ENCODE measurements at regions of chr20 and their contacts with region 1.

Region 1: DNA sequence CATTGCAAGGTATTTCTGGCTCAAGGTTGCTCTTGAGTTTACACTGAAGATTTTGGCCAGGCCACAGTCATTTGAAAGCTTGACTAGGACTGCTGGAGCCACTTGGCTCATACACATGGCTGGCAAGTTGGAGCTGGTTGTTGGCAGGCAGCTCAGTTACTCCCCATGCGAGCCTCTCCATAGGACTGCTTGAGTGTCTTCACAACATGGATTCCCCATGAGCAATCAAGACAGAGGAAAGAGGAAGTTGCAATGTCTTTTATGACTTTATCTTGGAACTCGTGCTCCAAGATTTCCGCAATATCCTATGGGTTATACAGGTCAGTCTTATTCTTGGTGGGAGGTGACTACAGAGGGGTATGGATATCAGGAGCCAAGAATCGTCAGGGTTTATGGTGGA is 1.4 kb upstream of the MANBAL start:
- DNase-seq: no peak
- ATAC-seq: no peak
- H3K4me3 ChIP-seq: no peak overlapping the region
- H3K27ac ChIP-seq: peak overlapping the region in 1 of 12 donors; percentile 97
- H3K4me1 ChIP-seq: peaks cover 0 to 41% (median 9%) of the 10 kb centered on the region in 12 donors
- H3K27me3 ChIP-seq: no peaks in the 10 kb centered on the region
- CTCF ChIP-seq: no peak
- POLR2A ChIP-seq: no peak

Region 2: GRCh38 chr20:37308086-37309050 is 20.3 kb after region 1 on chr20:
- intact Hi-C with region 1: loop called in 1 of 10 experiments (anchors 2 kb)
- DNase-seq: peak in 2 of 5 donors; percentile 39 to 58
- ATAC-seq: peak; percentile 21 to 64 (median 42)
- H3K4me3 ChIP-seq: no peak overlapping the region
- H3K27ac ChIP-seq: peak overlapping the region in 4 of 12 donors; percentile 0 to 22 (median 13)
- H3K4me1 ChIP-seq: peaks cover 0 to 50% (median 6%) of the 10 kb centered on the region in 12 donors
- H3K27me3 ChIP-seq: no peaks in the 10 kb centered on the region
- CTCF ChIP-seq: no peak
- POLR2A ChIP-seq: no peak

Region 3: GRCh38 chr20:37319235-37319671 is 31.2 kb after region 1 on chr20:
- intact Hi-C with region 1: no loop called
- DNase-seq: no peak
- ATAC-seq: no peak
- H3K4me3 ChIP-seq: no peak overlapping the region
- H3K27ac ChIP-seq: peak overlapping the region in 1 of 12 donors; percentile 28
- H3K4me1 ChIP-seq: peaks cover 0 to 39% (median 17%) of the 10 kb centered on the region in 12 donors
- H3K27me3 ChIP-seq: no peaks in the 10 kb centered on the region
- CTCF ChIP-seq: no peak
- POLR2A ChIP-seq: no peak

Region 4: DNA sequence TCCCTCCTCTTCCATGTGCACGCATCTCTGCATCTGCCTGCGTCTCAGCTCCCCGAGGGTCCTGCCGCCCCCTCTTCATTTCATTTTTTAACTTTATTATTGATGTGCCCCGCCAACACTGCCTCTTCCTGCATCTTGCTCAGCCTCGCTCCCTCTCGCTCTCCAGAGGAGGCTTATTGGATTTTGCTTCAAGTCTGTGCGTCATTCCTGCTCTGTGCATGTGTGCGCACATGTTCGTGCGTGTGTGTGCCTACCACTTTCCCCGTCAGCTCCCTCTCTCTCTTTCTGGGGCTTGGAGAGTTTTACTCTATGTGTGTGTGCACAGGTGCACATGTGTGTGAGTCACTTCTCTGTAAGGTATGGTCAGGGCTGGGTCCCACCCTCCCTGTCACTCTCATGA is 161.2 kb after region 1 on chr20:
- intact Hi-C with region 1: no loop called
- DNase-seq: no peak
- ATAC-seq: no peak
- H3K4me3 ChIP-seq: no peak overlapping the region
- H3K27ac ChIP-seq: no peak overlapping the region
- H3K4me1 ChIP-seq: no peaks in the 10 kb centered on the region
- H3K27me3 ChIP-seq: no peaks in the 10 kb centered on the region
- CTCF ChIP-seq: no peak
- POLR2A ChIP-seq: no peak

Measured in heart left ventricle (tissue), 16 donors.